Endothelial cell of umbilical vein (primary cell): ENCODE measurements at regions of chr18 and their contacts with region 1.

Region 1: GRCh38 chr18:7921938-7922587 is 354.9 kb downstream of the PTPRM start:
- DNase-seq: peak; percentile 95
- H3K4me3 ChIP-seq: no peak overlapping the region
- H3K27ac ChIP-seq: peak overlapping the region; percentile 77
- H3K4me1 ChIP-seq: peaks cover 20% of the 10 kb centered on the region
- H3K27me3 ChIP-seq: no peaks in the 10 kb centered on the region
- CTCF ChIP-seq: no peak
- POLR2A ChIP-seq: no peak

Region 2: DNA sequence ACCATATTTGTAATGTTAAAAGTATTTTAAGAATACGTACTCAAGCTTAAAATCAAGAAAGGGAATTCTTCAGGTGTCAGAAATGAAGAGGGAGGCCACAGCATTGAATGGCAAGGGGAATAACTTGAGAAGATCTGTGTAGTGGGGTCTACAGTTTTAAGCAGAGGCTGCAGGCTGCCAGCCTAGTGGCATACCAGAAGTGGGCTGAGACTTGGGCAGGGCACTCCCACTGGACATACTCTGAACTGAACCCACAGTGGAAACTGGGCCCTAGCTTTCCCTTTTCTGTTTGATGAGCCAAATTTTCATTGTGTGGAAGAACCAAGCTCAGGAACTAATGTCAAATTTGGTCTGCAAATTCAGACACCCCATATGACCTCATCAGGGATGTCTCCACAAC is 116.2 kb before region 1 on chr18:
- CTCF ChIA-PET with region 1: no interaction called
- POLR2A ChIA-PET with region 1: no interaction called
- dilution Hi-C with region 1: no loop called
- intact Hi-C with region 1: no loop called
- DNase-seq: no peak
- H3K4me3 ChIP-seq: no peak overlapping the region
- H3K27ac ChIP-seq: no peak overlapping the region
- H3K4me1 ChIP-seq: no peaks in the 10 kb centered on the region
- H3K27me3 ChIP-seq: no peaks in the 10 kb centered on the region
- CTCF ChIP-seq: no peak
- POLR2A ChIP-seq: no peak

Region 3: DNA sequence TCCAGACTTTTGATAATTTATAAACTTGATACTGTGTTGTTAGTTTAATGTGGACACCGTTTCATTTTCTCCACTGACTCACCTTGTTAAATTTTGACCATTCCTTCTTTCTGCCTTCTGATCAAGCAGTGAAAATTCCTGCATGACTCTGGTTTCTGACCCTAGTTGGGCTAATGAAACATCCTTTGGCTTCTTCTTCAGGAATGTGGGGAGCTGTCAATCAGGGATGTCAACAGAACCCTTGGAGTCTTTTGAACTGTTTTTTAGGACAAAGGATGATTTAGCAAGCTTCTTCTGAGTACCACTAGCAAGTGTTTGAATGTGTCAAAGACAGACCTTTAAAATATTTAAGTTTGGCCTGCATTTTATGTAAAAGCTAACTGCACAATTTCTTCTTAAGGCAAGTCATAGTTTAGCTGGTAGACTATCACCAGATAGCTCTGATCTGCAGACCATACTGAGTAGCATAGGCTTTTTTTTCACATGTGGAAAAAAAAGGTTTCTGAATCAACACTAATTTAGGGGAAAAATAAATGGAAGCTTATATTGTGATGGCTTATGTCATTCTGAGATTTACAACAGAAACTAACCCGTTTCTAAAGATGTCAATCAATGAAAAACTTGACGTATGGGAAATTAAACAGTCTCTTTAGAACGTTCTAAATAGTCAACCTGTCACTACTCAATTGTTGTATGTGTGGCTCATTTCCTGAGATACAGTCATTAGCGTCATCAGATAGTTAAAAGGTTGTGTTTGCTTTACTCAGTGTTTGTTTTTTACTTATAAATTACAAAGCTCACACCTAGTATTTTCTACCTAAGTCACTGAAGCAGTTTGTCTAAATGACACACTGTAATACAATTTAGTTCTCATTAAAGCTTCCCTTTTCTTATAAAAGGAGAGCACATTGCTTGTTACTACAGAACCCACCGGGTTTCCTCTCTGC is 43.5 kb before region 1 on chr18:
- CTCF ChIA-PET with region 1: no interaction called
- POLR2A ChIA-PET with region 1: no interaction called
- dilution Hi-C with region 1: no loop called
- intact Hi-C with region 1: loop called (anchors 2 kb)
- DNase-seq: peak; percentile 88
- H3K4me3 ChIP-seq: no peak overlapping the region
- H3K27ac ChIP-seq: peak overlapping the region; percentile 78
- H3K4me1 ChIP-seq: peaks cover 18% of the 10 kb centered on the region
- H3K27me3 ChIP-seq: no peaks in the 10 kb centered on the region
- CTCF ChIP-seq: no peak
- POLR2A ChIP-seq: no peak